ENCODE measurements at regions of chr6 and their contacts with region 1.

Region 1: GRCh38 chr6:31399589-31400466 is 3.6 kb upstream of the MICA start:
- DNase-seq: peak; percentile 57 to 96 (median 78)

Region 2: GRCh38 chr6:30672445-30673253 is 727.2 kb before region 1 on chr6 and contains the start of gene DHX16:
- intact Hi-C with region 1: no loop called
- DNase-seq: peak; percentile 81 to 97 (median 88)

Region 3: DNA sequence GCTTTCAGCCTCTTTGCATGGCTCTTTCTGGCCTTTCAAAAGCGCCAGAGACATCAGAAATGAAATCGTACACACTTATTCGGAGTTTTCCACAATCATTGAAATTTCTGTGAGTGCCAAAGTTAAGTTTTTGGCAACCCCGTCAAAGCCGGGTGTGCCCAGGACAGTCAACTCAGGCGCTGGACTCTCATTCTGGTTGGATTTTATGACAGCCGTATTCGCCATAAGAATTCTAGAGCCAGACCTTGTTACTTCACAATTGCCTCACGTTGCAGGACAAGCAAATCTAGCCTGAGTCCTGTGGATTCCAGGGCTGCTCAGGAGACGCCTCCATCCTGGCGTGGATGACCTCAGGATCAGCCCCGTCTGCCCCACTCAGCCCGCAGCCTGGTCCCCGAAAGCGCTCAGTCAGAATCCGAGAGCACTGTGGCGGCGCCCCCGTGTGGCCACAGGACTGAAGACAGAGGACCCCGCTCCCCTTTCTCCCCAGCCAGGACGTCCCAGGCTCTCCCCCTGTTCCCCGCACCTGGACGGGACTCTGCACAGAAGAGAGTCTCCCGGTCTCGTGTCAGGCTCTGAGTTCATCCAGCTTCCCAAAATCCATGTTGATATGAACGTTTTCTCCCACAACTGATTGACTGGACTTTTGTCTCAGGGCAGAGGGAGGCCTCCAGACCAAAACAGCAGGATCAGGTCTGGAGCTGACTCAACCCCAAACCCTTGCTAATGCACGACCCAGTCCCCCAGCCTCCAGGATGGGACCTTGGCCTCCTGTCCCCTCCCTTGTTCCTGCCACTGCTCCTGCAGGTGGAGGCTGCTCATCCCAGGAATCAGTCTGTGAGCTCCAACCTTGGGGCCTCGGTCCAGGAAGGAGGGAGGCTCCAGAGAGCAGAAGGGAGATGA is 41.8 kb after region 1 on chr6:
- intact Hi-C with region 1: loop called (anchors 1 kb)
- DNase-seq: peak; percentile 45 to 96 (median 72)

Region 4: GRCh38 chr6:31493875-31494694 is 94.3 kb after region 1 on chr6:
- intact Hi-C with region 1: loop called (anchors 10 kb)
- DNase-seq: peak; percentile 28 to 92 (median 60)